ENCODE measurements at regions of chr6 and their contacts with region 1.

Region 1: DNA sequence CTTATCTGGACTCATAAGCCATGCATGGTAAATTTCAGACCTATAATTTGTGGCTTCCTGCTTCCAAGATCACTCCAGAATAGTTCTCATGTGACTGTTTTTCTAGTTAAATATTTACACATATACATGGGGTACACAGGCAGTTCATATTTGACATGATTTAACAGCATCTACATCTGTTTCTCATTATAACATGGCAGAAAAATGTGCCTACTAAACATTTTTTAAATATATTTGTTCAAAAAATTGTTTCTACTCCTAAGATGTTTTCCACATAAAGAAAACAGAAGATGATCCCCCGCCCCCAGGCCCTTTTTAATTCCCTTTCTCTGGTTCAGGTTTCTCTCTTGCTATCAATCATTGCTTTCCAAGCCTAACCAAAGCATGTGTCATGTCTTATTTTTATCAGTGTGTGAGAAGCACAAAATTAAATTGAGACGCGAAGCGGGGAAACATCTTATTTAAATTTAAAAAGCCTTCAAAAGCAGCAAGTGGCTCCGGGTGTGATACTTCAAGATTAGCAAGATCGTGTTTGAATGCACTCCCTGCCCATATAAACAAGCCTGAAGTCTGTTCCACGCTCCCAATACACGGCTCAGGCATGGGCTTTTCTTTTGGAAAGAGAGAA is 37.3 kb downstream of the IPCEF1 start:
- DNase-seq: peak; percentile 36
- ATAC-seq: peak; percentile 52
- H3K4me3 ChIP-seq: no peak overlapping the region
- H3K27ac ChIP-seq: peak overlapping the region; percentile 25
- H3K4me1 ChIP-seq: peaks cover 25% of the 10 kb centered on the region
- H3K27me3 ChIP-seq: no peaks in the 10 kb centered on the region
- CTCF ChIP-seq: no peak

Region 2: DNA sequence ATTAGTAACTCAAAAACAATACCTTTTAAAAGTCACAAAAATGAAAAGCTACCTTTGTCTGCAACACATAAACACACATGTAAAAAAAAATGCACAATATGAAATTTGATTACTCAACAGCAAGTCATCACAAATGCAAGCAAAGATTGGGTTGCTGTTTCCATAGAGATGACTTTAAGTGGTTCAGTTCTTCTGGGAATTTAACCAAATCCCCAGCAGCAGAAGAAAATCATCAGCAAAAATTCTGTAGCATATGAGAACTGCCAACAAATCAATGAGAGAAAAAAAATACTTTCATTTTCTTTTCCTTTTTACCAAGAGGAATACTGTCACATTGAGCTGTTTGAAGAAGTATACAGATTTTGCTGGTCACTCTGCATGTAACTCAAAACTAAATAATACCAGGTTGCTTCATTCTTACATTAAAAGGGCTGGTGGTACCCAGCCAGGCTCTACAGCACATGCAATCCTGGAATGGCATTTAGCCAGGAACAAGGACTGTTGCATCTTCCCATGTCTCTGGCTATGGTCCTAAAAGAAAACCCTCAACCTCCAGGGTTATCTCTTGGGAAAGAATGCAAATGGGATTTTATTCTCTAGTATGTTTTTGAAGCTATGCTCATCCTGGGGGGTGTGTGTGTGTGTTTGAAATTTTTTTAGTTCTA is 122.0 kb before region 1 on chr6:
- CTCF ChIA-PET with region 1: no interaction called
- POLR2A ChIA-PET with region 1: no interaction called
- intact Hi-C with region 1: loop called (anchors 5 kb)
- DNase-seq: peak; percentile 66
- ATAC-seq: peak; percentile 78
- H3K4me3 ChIP-seq: no peak overlapping the region
- H3K27ac ChIP-seq: peak overlapping the region; percentile 26; the same call in 1 of the 2 replicates
- H3K4me1 ChIP-seq: peaks cover 13% of the 10 kb centered on the region
- H3K27me3 ChIP-seq: no peaks in the 10 kb centered on the region
- CTCF ChIP-seq: no peak

Region 3: GRCh38 chr6:154292890-154293398 is 26.4 kb before region 1 on chr6:
- CTCF ChIA-PET with region 1: no interaction called
- POLR2A ChIA-PET with region 1: no interaction called
- intact Hi-C with region 1: loop called (anchors 1 kb)
- DNase-seq: peak; percentile 88
- ATAC-seq: peak; percentile 84
- H3K4me3 ChIP-seq: peak overlapping the region; percentile 47
- H3K27ac ChIP-seq: peak overlapping the region; percentile 91
- H3K4me1 ChIP-seq: peaks cover 42% of the 10 kb centered on the region
- H3K27me3 ChIP-seq: no peaks in the 10 kb centered on the region
- CTCF ChIP-seq: no peak

Region 4: DNA sequence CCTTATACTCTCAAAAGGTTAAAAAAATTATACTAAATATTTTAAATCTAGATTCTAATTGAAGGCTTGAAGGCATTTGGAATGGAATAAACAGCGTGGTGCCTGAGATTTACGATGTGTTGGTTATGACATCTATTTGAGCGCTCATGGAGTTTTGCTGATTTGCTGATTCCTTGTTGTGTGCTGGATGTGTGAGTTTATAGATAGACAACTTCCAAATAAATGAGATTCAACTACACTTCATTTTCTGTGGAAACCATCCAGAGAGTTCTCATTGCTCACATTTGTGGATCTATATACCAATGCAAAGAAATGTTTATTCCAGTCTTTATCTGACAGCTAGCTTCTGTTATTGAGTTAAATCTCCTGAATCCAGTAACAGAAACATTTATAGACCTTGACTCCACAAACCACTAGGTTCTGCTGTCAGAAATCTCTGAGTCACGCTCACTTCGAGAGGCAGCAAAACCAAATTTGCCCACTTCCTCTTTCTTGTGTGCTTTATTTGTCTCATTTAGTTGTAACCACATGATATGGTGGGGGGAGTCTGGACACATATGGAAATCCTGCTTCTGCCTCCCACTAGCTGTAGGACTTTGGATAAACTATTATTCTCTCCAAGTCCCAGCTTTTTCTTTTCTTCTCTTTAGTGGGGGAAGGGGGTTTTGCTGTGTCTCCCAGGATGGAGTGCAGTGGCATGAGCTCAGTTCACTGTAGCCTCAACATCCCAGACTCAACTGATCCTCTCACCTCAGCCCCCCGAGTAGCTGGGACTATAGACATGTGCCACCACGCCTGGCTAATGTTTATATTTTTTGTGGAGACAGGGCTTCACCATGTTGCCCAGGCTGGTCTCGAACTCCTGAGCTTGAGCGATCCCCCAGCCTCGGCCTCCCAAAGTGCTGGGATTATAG is 17.2 kb before region 1 on chr6:
- CTCF ChIA-PET with region 1: no interaction called
- POLR2A ChIA-PET with region 1: no interaction called
- intact Hi-C with region 1: loop called (anchors 2 kb)
- DNase-seq: peak; percentile 79
- ATAC-seq: peak; percentile 53
- H3K4me3 ChIP-seq: no peak overlapping the region
- H3K27ac ChIP-seq: peak overlapping the region; percentile 65
- H3K4me1 ChIP-seq: peaks cover 57% of the 10 kb centered on the region
- H3K27me3 ChIP-seq: no peaks in the 10 kb centered on the region
- CTCF ChIP-seq: no peak

Measured in PC-3 (cell line).